KBM-7 (cell line): ENCODE measurements at regions of chrX and their contacts with region 1.

Region 1: GRCh38 chrX:119775517-119776238 is 15.8 kb downstream of the RPL39 start:
- DNase-seq: peak; percentile 54

Region 2: GRCh38 chrX:119529345-119530276 is 246.1 kb before region 1 on chrX:
- in situ Hi-C with region 1: loop called (anchors 10 kb)
- DNase-seq: peak; percentile 22

Region 3: DNA sequence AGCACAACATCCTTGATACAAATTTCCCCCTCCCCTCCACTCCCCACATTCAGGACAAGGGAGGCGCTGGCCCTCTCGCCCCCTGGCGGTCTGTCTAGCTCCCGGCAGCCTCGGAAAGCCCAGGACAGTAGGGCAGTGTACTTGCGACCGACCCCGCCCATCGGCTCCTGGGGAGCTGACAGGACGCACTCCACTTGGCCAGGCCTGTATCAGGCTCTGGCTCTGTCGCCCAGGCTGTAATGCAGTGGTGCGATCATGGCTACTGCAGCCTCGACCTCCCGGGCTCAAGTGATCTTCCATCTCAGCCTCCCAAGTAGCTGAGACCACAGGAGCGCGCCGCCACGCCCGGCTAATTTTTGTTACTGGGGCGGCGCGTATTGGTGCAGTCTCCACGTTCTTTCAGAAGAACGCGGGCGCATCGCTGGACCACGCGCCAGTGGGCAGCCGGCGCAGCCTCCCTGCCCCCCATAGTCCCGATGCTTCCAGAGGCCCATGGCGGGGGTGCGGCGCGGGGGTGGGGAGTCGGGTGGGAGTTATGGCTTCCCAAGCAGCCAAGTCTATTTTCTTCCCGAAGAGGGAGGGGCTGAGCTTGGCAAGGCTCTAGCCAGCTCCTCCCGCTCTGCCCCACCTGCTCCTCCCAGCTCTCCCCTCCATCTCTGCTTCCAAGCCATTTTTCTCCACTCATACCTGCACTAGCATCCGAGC is 112.2 kb after region 1 on chrX:
- in situ Hi-C with region 1: no loop called
- DNase-seq: peak; percentile 73